ENCODE measurements at regions of chr2 and their contacts with region 1.

Region 1: GRCh38 chr2:230987137-230988020 is 8.5 kb upstream of the SPATA3 start:
- DNase-seq: no peak
- H3K4me3 ChIP-seq: peak overlapping the region; percentile 43 to 50 (median 46)
- H3K27ac ChIP-seq: no peak overlapping the region
- H3K4me1 ChIP-seq: peaks cover 3 to 10% (median 6%) of the 10 kb centered on the region in 4 donors
- H3K27me3 ChIP-seq: peaks cover 0 to 39% (median 3%) of the 10 kb centered on the region in 4 donors
- CTCF ChIP-seq: peak; percentile 84 to 96 (median 93)
- EP300 ChIP-seq: no peak
- POLR2A ChIP-seq: no peak

Region 2: GRCh38 chr2:230564805-230565779 is 422.3 kb before region 1 on chr2:
- intact Hi-C with region 1: no loop called
- DNase-seq: no peak
- H3K4me3 ChIP-seq: no peak overlapping the region
- H3K27ac ChIP-seq: no peak overlapping the region
- H3K4me1 ChIP-seq: no peaks in the 10 kb centered on the region
- H3K27me3 ChIP-seq: no peaks in the 10 kb centered on the region
- CTCF ChIP-seq: no peak
- EP300 ChIP-seq: no peak
- POLR2A ChIP-seq: no peak

Region 3: GRCh38 chr2:230824406-230824978 is 162.9 kb before region 1 on chr2:
- intact Hi-C with region 1: loop called (anchors 1 kb)
- DNase-seq: no peak
- H3K4me3 ChIP-seq: peak overlapping the region; percentile 29 to 55 (median 34)
- H3K27ac ChIP-seq: no peak overlapping the region
- H3K4me1 ChIP-seq: peaks cover 9 to 21% (median 19%) of the 10 kb centered on the region in 4 donors
- H3K27me3 ChIP-seq: peaks cover 13 to 38% (median 20%) of the 10 kb centered on the region in 4 donors
- CTCF ChIP-seq: peak; percentile 67 to 74 (median 68)
- EP300 ChIP-seq: no peak
- POLR2A ChIP-seq: no peak

Region 4: DNA sequence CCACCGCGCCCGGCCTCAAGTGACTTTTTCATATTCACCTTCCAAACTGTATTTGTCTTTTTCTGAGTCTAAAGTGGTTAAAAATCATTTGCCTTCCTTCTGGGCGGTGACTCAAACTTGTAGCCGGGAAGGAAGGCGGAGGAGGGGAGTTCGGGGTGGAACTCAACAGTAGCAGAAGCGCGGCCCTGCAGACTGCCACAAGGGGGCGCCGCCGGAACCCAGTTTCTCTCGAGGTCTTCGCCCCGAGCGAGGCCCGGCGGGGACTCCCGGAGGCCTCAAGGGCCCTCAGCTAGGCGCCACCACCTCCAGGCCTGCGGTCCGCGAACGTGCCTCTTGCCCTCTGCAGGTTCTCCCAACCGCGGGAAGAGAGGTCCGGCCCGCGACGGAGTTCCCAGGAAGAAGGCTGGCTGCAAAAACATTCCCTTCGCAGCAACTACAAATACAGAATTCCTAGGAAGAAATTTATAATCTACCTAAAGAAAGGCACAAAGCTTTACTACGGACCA is 139.4 kb before region 1 on chr2:
- intact Hi-C with region 1: loop called (anchors 2 kb)
- DNase-seq: no peak
- H3K4me3 ChIP-seq: peak overlapping the region in 3 of 4 donors; percentile 16 to 41 (median 28)
- H3K27ac ChIP-seq: no peak overlapping the region
- H3K4me1 ChIP-seq: peaks cover 4 to 9% (median 8%) of the 10 kb centered on the region in 4 donors
- H3K27me3 ChIP-seq: peaks cover 0 to 20% (median 0%) of the 10 kb centered on the region in 4 donors
- CTCF ChIP-seq: peak; percentile 85 to 96 (median 93)
- EP300 ChIP-seq: no peak
- POLR2A ChIP-seq: no peak

Measured in esophagus muscularis mucosa (tissue), 4 donors.